Panc1 (cell line): ENCODE measurements at regions of chr1 and their contacts with region 1.

Region 1: GRCh38 chr1:115912116-115912515 is 64.2 kb upstream of the SLC22A15 start:
- DNase-seq: no peak
- ATAC-seq: no peak
- H3K4me3 ChIP-seq: no peak overlapping the region
- H3K27ac ChIP-seq: no peak overlapping the region
- H3K4me1 ChIP-seq: no peaks in the 10 kb centered on the region
- H3K27me3 ChIP-seq: no peaks in the 10 kb centered on the region
- CTCF ChIP-seq: no peak

Region 2: GRCh38 chr1:115796897-115797296 is 115.2 kb before region 1 on chr1:
- CTCF ChIA-PET with region 1: no interaction called
- POLR2A ChIA-PET with region 1: interaction called, 12 read pairs
- in situ Hi-C with region 1: no loop called
- intact Hi-C with region 1: no loop called
- DNase-seq: no peak
- ATAC-seq: no peak
- H3K4me3 ChIP-seq: no peak overlapping the region
- H3K27ac ChIP-seq: no peak overlapping the region
- H3K4me1 ChIP-seq: no peaks in the 10 kb centered on the region
- H3K27me3 ChIP-seq: no peaks in the 10 kb centered on the region
- CTCF ChIP-seq: no peak

Region 3: GRCh38 chr1:115850937-115851336 is 61.2 kb before region 1 on chr1:
- CTCF ChIA-PET with region 1: no interaction called
- POLR2A ChIA-PET with region 1: no interaction called
- in situ Hi-C with region 1: no loop called
- intact Hi-C with region 1: no loop called
- DNase-seq: no peak
- ATAC-seq: no peak
- H3K4me3 ChIP-seq: no peak overlapping the region
- H3K27ac ChIP-seq: no peak overlapping the region
- H3K4me1 ChIP-seq: no peaks in the 10 kb centered on the region
- H3K27me3 ChIP-seq: no peaks in the 10 kb centered on the region
- CTCF ChIP-seq: no peak

Region 4: GRCh38 chr1:115900856-115901255 is 11.3 kb before region 1 on chr1:
- CTCF ChIA-PET with region 1: no interaction called
- POLR2A ChIA-PET with region 1: no interaction called
- in situ Hi-C with region 1: no loop called
- intact Hi-C with region 1: no loop called
- DNase-seq: no peak
- ATAC-seq: no peak
- H3K4me3 ChIP-seq: no peak overlapping the region
- H3K27ac ChIP-seq: no peak overlapping the region
- H3K4me1 ChIP-seq: no peaks in the 10 kb centered on the region
- H3K27me3 ChIP-seq: no peaks in the 10 kb centered on the region; the same call in 1 of the 2 replicates
- CTCF ChIP-seq: no peak

Region 5: DNA sequence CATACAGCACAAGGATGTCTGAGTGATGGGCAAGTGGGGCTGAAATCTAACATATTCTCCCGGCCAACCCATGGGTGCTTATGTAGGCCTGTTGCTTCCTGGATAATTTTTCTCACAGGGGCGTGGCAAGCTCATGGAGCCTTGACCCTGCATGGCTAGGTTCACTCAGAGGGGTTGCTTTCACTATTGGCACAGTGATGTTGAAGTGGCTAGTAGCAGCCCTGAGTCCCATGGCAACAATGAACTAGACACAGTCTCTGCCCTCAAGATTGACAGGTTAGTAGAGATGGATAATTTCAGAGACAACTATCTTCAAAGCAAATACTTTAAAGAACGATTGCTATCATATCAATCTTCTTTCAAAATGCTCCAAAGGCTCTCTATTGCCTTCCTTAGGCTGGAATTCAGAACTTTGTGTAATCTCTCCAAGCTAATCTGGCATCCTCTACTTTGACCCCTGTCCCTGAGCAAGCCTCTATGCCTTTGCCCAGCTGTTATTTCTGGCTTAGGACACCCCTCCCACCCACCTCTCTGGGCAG is 192.6 kb after region 1 on chr1:
- CTCF ChIA-PET with region 1: no interaction called
- POLR2A ChIA-PET with region 1: no interaction called
- in situ Hi-C with region 1: no loop called
- intact Hi-C with region 1: no loop called
- DNase-seq: no peak
- ATAC-seq: no peak
- H3K4me3 ChIP-seq: no peak overlapping the region
- H3K27ac ChIP-seq: no peak overlapping the region
- H3K4me1 ChIP-seq: no peaks in the 10 kb centered on the region
- H3K27me3 ChIP-seq: no peaks in the 10 kb centered on the region
- CTCF ChIP-seq: no peak

Region 6: GRCh38 chr1:116360429-116361173 is 448.5 kb after region 1 on chr1:
- CTCF ChIA-PET with region 1: no interaction called
- POLR2A ChIA-PET with region 1: no interaction called
- in situ Hi-C with region 1: no loop called
- intact Hi-C with region 1: no loop called
- DNase-seq: no peak
- ATAC-seq: no peak
- H3K4me3 ChIP-seq: no peak overlapping the region
- H3K27ac ChIP-seq: no peak overlapping the region
- H3K4me1 ChIP-seq: no peaks in the 10 kb centered on the region
- H3K27me3 ChIP-seq: no peaks in the 10 kb centered on the region
- CTCF ChIP-seq: peak; percentile 12; the same call in 1 of the 2 replicates